ENCODE measurements at regions of chr12 and their contacts with region 1.

Region 1: GRCh38 chr12:76037130-76038103 is 5.8 kb upstream of the PHLDA1 start:
- DNase-seq: no peak
- ATAC-seq: peak; percentile 79
- H3K4me3 Mint-ChIP-seq: no peak overlapping the region
- H3K27ac Mint-ChIP-seq: no peak overlapping the region
- H3K4me1 Mint-ChIP-seq: peaks cover 9% of the 10 kb centered on the region
- H3K27me3 Mint-ChIP-seq: no peaks in the 10 kb centered on the region
- CTCF ChIP-seq: peak; percentile 55

Region 2: DNA sequence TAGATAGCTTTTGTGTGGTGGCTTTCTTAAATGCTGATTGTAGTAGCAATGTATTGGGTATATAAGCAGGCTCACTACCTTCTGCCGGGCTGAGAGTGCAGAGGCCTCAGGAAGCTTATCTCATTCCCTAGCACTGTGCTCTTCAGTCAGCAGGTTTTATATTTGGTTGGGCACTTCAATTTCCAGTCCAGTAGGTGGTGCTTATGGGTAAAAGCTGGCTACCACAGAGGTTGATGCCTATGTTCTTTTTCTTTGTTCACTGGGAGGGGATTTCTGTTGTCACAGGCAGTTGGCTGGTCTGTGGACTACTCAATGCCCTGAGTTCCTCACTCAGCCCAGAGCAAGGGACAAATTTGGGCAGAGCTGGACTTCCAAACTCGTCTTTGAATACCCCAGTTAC is 599.9 kb before region 1 on chr12:
- CTCF ChIA-PET with region 1: no interaction called
- POLR2A ChIA-PET with region 1: no interaction called
- intact Hi-C with region 1: loop called (anchors 1 kb)
- DNase-seq: no peak
- ATAC-seq: peak; percentile 72
- H3K4me3 Mint-ChIP-seq: no peak overlapping the region
- H3K27ac Mint-ChIP-seq: no peak overlapping the region
- H3K4me1 Mint-ChIP-seq: peaks cover 3% of the 10 kb centered on the region
- H3K27me3 Mint-ChIP-seq: peaks cover 10% of the 10 kb centered on the region
- CTCF ChIP-seq: no peak

Region 3: GRCh38 chr12:75511116-75512048 is 526.0 kb before region 1 on chr12 and contains the start of gene KRR1:
- CTCF ChIA-PET with region 1: interaction called, 10 read pairs
- POLR2A ChIA-PET with region 1: interaction called, 23 read pairs
- intact Hi-C with region 1: loop called (anchors 1 kb)
- DNase-seq: peak; percentile 72
- ATAC-seq: peak; percentile 96
- H3K4me3 Mint-ChIP-seq: peak within 1 kb of the TSS; percentile 99
- H3K27ac Mint-ChIP-seq: peak within 1 kb of the TSS; percentile 99
- H3K4me1 Mint-ChIP-seq: peaks cover 27% of the 10 kb centered on the region
- H3K27me3 Mint-ChIP-seq: no peaks in the 10 kb centered on the region
- CTCF ChIP-seq: no peak
- total RNA-seq, gene KRR1: 75.0 and 85.1 TPM in 2 replicates

Region 4: GRCh38 chr12:75560167-75560566 is 477.2 kb before region 1 on chr12:
- CTCF ChIA-PET with region 1: interaction called, 3 read pairs
- POLR2A ChIA-PET with region 1: no interaction called
- intact Hi-C with region 1: loop called (anchors 1 kb)
- DNase-seq: no peak
- ATAC-seq: no peak
- H3K4me3 Mint-ChIP-seq: no peak overlapping the region
- H3K27ac Mint-ChIP-seq: no peak overlapping the region
- H3K4me1 Mint-ChIP-seq: no peaks in the 10 kb centered on the region
- H3K27me3 Mint-ChIP-seq: peaks cover 17% of the 10 kb centered on the region
- CTCF ChIP-seq: no peak

Region 5: DNA sequence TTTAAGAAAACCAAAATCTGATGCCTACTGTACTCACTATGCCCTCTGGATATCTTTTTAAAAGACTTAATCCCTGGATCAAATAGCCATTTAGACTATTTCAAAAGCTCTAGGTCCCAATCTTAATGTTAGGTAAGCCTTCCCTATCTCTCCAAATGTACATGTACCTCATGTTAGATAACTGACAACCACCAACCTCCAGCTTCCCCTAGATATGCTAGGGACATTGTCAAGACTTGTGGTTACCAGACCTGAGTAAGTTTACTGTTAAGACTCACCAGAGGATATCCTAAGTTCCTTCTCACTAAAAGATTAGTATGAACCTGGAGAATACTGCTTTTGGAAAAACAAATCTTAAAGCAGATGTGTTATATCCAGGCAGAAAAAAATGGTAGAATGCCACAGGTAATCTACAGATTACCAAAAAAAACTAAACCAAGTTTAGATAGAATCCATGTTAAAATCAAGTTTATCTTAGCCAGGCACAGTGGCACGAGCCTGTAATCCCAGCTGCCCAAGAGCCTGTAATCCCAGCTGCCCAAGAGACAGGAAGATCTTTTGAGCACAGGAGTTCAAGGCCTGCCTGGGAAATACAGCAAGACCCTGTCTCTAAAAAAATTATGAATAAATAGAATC is 37.4 kb after region 1 on chr12:
- CTCF ChIA-PET with region 1: no interaction called
- POLR2A ChIA-PET with region 1: no interaction called
- intact Hi-C with region 1: no loop called
- DNase-seq: no peak
- ATAC-seq: no peak
- H3K4me3 Mint-ChIP-seq: no peak overlapping the region
- H3K27ac Mint-ChIP-seq: no peak overlapping the region
- H3K4me1 Mint-ChIP-seq: peaks cover 58% of the 10 kb centered on the region
- H3K27me3 Mint-ChIP-seq: no peaks in the 10 kb centered on the region
- CTCF ChIP-seq: no peak

Region 6: DNA sequence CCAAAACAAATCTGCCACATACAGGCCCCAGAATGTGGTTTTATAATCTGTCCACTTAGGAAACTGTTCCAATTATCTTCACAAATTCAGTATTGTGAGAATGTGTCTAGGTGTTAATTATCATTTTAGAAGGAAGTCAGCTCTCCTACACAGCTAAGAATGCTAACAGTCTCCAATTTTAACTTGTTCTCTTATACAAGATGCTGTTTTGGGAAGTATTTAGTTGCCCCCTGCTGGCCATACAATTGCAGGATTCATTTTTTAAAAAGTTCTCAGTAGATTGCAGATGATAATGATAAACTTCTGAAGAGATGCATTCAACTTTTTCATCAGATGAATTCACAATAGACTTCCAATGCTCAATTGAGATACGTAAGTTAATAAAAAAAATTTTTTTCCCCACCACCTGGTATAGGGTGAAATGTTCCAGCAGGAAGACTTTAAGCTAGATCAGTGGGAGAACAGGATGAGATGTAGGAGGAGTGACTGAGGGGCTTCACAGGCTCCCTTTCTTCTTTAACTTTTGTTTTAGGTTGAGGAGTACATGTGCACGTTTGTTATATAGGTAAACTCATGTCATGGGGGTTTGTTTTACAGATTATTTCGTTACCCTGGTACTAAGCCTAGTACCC is 549.5 kb after region 1 on chr12:
- CTCF ChIA-PET with region 1: interaction called, 7 read pairs
- POLR2A ChIA-PET with region 1: no interaction called
- intact Hi-C with region 1: loop called (anchors 2 kb)
- DNase-seq: no peak
- ATAC-seq: peak; percentile 58
- H3K4me3 Mint-ChIP-seq: no peak overlapping the region
- H3K27ac Mint-ChIP-seq: no peak overlapping the region
- H3K4me1 Mint-ChIP-seq: peaks cover 9% of the 10 kb centered on the region
- H3K27me3 Mint-ChIP-seq: no peaks in the 10 kb centered on the region
- CTCF ChIP-seq: peak; percentile 82

Measured in activated B cell treated with CpG ODN at 0.5 μM for 24 hours (primary cell).